CD14-positive monocyte (primary cell): ENCODE measurements at regions of chr2 and their contacts with region 1.

Region 1: DNA sequence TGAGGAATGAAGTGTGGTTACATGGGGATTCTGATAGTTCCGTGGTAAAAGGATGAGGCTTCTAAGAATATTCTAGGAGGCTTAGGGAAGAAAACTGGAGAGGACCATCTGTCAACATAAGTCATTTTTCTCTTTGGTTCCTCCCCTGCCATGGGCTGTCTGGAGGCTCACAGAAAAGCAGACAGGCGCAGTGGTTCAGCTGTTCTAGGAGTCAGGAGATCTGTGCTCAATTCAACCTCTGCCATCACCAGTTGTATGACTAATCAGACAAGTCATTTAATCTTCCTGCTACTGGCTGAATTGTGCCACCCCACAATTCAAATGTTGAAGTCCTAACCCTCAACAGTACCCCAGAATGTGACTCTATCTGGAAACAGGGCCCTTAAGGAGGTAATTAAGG is 36.4 kb downstream of the ADAM17 start:
- DNase-seq: peak in 2 of 3 donors; percentile 7 to 12
- H3K4me3 ChIP-seq: no peak overlapping the region
- H3K4me3 Mint-ChIP-seq: peak overlapping the region in 1 of 2 donors; percentile 31
- H3K27ac ChIP-seq: peak overlapping the region in 1 of 2 donors; percentile 51
- H3K27ac Mint-ChIP-seq: peak overlapping the region in 4 of 7 donors; percentile 48 to 76 (median 68)
- H3K4me1 ChIP-seq: no peaks in the 10 kb centered on the region
- H3K4me1 Mint-ChIP-seq: no peaks in the 10 kb centered on the region
- H3K27me3 ChIP-seq: no peaks in the 10 kb centered on the region
- H3K27me3 Mint-ChIP-seq: peaks cover 0 to 1% (median 0%) of the 10 kb centered on the region in 3 donors
- CTCF ChIP-seq: no peak

Region 2: DNA sequence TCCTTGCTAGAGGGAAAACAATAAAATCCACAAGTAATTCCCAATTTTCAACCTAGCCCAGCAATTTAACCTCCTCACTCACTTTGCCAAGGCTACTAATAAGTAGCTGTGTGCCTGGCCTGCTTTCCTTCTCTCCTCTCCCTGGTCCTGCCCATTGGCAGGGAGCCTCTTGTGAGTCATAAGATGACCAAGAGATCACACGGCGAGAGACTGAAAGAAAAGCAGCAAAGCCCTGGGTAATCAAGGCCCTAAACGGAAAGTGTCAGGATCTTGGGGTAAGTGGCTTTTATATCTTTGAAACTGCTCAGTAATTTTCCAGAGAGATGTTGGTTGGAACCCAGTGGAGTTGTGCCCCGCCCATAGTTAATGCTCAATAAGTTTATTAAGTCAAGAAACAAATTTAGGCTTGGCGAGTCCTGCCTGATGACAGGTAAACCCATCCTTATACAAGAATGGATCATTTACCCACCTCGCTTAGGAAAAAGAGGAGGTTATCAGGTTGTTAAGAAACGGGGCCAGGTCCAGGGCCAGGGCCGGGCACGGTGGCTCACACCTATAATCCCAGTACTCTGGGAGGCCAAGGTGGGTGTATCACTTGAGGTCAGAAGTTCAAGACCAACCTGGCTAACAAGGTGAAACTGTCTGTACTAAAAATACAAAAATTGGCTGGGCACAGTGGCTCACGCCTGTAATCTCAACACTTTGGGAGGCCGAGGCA is 46.3 kb after region 1 on chr2:
- intact Hi-C with region 1: loop called in 1 of 2 experiments (anchors 10 kb)
- DNase-seq: peak in 1 of 3 donors; percentile 33
- H3K4me3 ChIP-seq: no peak overlapping the region
- H3K4me3 Mint-ChIP-seq: no peak overlapping the region
- H3K27ac ChIP-seq: no peak overlapping the region
- H3K27ac Mint-ChIP-seq: no peak overlapping the region
- H3K4me1 ChIP-seq: no peaks in the 10 kb centered on the region
- H3K4me1 Mint-ChIP-seq: no peaks in the 10 kb centered on the region
- H3K27me3 ChIP-seq: no peaks in the 10 kb centered on the region
- H3K27me3 Mint-ChIP-seq: peaks cover 0 to 2% (median 0%) of the 10 kb centered on the region in 3 donors
- CTCF ChIP-seq: no peak